PC-9 (cell line): ENCODE measurements at regions of chr3 and their contacts with region 1.

Region 1: DNA sequence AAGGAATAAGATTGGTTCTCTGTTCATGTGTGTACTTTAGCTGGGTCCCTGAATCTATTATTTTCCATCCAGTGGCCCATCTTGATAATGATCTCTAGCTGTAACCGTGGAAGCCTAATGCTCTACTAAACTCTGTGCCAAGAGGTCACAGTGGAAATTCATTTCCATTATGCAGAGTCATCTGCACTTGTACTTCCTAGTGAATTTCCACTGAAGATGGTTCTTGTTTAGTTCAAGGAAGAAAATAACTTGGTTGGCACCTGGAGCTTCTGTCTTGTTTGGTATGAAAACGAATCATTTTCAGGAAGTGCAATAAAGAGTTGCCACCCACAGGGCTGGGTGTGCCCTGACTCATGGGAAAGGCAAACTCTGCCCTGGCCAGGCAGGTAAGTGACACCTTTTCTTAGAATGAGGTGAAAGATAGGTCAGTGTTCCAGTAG is 10.3 kb downstream of the LPP start:
- DNase-seq: peak; percentile 91 to 100
- H3K4me3 ChIP-seq: peak overlapping the region; percentile 16; the same call in 1 of the 2 replicates
- H3K27ac ChIP-seq: peak overlapping the region; percentile 91
- H3K4me1 ChIP-seq: peaks cover 65% of the 10 kb centered on the region
- H3K27me3 ChIP-seq: no peaks in the 10 kb centered on the region
- CTCF ChIP-seq: no peak; the same call in 1 of the 2 replicates

Region 2: DNA sequence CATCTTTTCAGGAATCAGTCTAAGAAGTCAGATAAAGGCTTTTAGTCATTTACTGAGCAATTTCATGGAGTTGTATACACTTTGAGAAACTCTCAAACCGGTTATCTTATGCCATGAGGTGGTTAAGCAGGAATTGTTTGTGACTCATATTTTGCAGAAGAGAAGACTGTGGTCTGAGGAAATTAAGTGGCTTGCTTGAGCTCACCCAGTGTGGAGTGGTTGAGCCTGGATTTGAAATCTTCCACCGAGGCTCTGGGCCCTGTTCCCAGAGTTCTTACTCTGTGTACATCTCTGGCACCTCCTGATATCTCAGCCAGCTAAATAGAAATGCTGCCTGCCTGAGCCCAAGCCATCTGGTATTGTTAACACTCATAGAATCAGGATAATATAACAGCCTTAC is 381.2 kb before region 1 on chr3:
- CTCF ChIA-PET with region 1: no interaction called
- POLR2A ChIA-PET with region 1: interaction called, 11 read pairs
- intact Hi-C with region 1: no loop called
- DNase-seq: peak; percentile 47 to 98
- H3K4me3 ChIP-seq: no peak overlapping the region
- H3K27ac ChIP-seq: peak overlapping the region; percentile 62
- H3K4me1 ChIP-seq: peaks cover 23% of the 10 kb centered on the region
- H3K27me3 ChIP-seq: no peaks in the 10 kb centered on the region
- CTCF ChIP-seq: no peak

Region 3: DNA sequence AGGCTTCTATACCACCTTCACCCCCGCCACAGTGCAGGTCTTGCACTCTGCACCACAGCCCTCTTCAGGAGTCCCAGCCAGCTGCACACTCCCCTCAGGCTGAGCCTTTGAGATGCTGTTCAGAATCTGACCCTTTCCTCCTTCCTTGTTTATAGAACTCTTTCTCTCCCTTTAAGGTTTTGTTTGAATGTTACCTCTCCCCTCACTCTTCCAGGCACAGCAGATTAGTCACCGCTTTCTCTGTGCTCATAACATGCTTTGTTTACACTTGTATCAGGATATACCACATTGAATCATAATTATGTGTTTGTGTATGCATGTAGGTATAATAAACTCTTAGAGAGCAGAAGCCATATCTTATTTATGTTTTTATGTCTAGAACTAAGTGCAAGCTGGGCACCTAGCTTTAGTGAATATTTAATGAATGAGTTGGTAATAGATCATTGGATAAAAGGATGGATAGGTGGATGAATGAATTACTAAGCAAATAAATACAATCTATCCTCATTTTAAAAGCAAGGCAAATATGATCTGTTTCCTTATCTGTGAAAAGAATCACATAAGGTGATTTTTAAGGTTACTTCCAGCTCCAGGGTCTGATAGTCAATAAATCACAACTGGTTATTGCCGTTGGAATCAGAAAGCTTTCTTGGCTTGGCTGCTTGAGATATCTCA is 250.5 kb before region 1 on chr3:
- CTCF ChIA-PET with region 1: no interaction called
- POLR2A ChIA-PET with region 1: no interaction called
- intact Hi-C with region 1: loop called (anchors 1 kb)
- DNase-seq: peak; percentile 64 to 100
- H3K4me3 ChIP-seq: peak overlapping the region; percentile 15; the same call in 1 of the 2 replicates
- H3K27ac ChIP-seq: peak overlapping the region; percentile 94
- H3K4me1 ChIP-seq: peaks cover 85% of the 10 kb centered on the region
- H3K27me3 ChIP-seq: no peaks in the 10 kb centered on the region
- CTCF ChIP-seq: no peak

Region 4: DNA sequence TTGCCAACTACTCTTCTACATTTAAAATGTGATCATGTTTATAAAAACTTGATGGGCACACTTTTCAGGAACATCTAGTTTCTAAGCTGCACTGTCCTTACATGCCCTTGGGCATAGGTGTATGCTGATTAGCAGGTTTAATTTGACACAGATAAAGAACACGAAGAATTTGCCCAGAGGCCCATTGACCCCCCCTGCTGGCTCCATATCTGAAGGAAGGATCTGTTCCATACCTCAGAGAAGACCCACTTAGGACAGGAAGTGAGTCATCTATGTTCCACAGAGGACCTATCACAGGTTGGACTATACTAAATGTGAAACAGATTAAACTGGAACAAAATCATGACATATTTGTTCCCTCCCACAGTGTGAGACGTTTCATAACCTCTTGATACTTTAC is 103.1 kb before region 1 on chr3:
- CTCF ChIA-PET with region 1: no interaction called
- POLR2A ChIA-PET with region 1: no interaction called
- intact Hi-C with region 1: loop called (anchors 1 kb)
- DNase-seq: peak; percentile 92 to 99
- H3K4me3 ChIP-seq: no peak overlapping the region
- H3K27ac ChIP-seq: peak overlapping the region; percentile 46
- H3K4me1 ChIP-seq: peaks cover 36% of the 10 kb centered on the region
- H3K27me3 ChIP-seq: no peaks in the 10 kb centered on the region
- CTCF ChIP-seq: no peak

Region 5: DNA sequence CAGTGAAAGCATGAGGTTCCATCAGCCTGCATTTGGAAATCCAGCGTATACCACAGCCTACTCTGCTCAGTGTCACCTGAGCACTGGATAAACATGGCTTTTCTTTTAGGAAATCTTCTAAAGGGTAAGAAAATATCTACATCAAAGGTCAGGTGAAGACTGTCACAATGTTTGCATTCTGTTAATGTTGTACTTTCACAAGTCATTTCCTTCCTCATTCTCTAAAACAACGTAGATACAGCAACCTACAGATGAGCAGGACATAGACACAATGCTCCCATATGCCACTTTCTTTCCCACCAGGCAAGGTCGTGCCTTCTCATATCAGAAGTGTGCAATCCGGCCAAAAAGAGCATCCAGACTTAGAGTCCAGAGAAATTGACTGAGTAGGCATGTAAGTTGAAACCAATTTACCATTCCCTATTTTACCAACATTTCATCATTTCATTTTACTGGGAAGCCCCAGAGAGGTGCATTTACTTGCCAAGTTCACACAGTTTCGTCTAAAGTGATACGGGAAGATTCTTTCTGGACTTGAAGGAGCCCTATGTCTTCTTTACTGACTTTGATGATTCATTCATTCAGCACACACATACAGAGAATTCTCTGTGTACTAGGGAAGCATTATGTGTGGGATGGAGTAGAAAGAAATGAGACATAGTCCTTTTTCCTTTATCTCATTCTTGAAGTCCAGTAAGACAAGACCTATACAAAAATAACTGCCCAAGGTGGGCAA is 40.9 kb before region 1 on chr3:
- CTCF ChIA-PET with region 1: no interaction called
- POLR2A ChIA-PET with region 1: no interaction called
- intact Hi-C with region 1: no loop called
- DNase-seq: no peak
- H3K4me3 ChIP-seq: no peak overlapping the region
- H3K27ac ChIP-seq: no peak overlapping the region
- H3K4me1 ChIP-seq: peaks cover 12% of the 10 kb centered on the region; the same call in 1 of the 2 replicates
- H3K27me3 ChIP-seq: no peaks in the 10 kb centered on the region
- CTCF ChIP-seq: no peak

Region 6: DNA sequence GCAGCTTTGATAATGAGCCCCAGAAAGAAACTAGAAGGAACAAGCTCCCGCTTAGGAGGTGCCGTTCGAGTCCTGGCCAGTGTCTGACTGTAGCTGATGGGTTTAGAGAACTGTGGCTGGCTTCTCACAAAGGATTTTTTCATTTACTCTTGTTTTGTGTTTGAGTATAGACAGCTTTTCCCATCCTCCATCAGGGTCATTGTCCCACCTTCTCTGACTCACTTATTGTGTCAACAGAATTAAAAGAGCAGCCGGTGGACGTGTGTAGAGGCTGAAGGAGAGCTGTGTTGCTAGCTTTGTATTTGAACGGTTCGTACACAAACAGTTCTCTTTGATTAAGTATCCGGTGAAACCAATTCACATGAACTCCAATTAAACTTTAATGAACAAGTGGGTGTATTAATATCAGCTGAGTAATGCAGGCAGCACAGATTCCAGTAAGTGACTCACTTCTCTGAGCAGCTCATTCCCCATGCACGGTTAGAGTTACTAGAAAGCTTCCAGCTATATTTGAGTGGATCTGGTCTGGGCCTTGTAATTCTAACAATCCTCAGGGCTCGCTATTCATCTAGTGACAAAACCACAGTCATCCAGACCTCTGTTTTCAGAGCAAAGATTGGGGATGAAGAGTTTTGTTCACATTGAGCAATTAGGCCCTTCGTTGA is 130.7 kb after region 1 on chr3:
- CTCF ChIA-PET with region 1: no interaction called
- POLR2A ChIA-PET with region 1: no interaction called
- intact Hi-C with region 1: loop called (anchors 1 kb)
- DNase-seq: peak; percentile 63 to 99
- H3K4me3 ChIP-seq: peak overlapping the region; percentile 8; the same call in 1 of the 2 replicates
- H3K27ac ChIP-seq: peak overlapping the region; percentile 77
- H3K4me1 ChIP-seq: peaks cover 55% of the 10 kb centered on the region
- H3K27me3 ChIP-seq: no peaks in the 10 kb centered on the region
- CTCF ChIP-seq: no peak

Region 7: GRCh38 chr3:188819939-188820338 is 655.7 kb after region 1 on chr3:
- CTCF ChIA-PET with region 1: no interaction called
- POLR2A ChIA-PET with region 1: no interaction called
- intact Hi-C with region 1: loop called (anchors 10 kb)
- DNase-seq: no peak
- H3K4me3 ChIP-seq: no peak overlapping the region
- H3K27ac ChIP-seq: no peak overlapping the region
- H3K4me1 ChIP-seq: peaks cover 33% of the 10 kb centered on the region
- H3K27me3 ChIP-seq: no peaks in the 10 kb centered on the region
- CTCF ChIP-seq: no peak

Region 8: GRCh38 chr3:188947401-188948280 is 783.4 kb after region 1 on chr3:
- CTCF ChIA-PET with region 1: no interaction called
- POLR2A ChIA-PET with region 1: no interaction called
- intact Hi-C with region 1: loop called (anchors 2 kb)
- DNase-seq: peak; percentile 88 to 95
- H3K4me3 ChIP-seq: peak overlapping the region; percentile 57
- H3K27ac ChIP-seq: peak overlapping the region; percentile 7; the same call in 1 of the 2 replicates
- H3K4me1 ChIP-seq: peaks cover 39% of the 10 kb centered on the region
- H3K27me3 ChIP-seq: no peaks in the 10 kb centered on the region
- CTCF ChIP-seq: peak; percentile 66